Common myeloid progenitor, CD34-positive (primary cell): ENCODE measurements at regions of chr17 and their contacts with region 1.

Region 1: GRCh38 chr17:8057691-8058114 is 18.8 kb downstream of the ALOX15B start:
- DNase-seq: peak; percentile 81 to 91 (median 89)
- H3K4me3 ChIP-seq: peak overlapping the region in 1 of 7 experiments; percentile 14
- H3K27ac ChIP-seq: no peak overlapping the region
- H3K4me1 ChIP-seq: peaks cover 35 to 58% (median 53%) of the 10 kb centered on the region in 4 experiments
- H3K27me3 ChIP-seq: peaks cover 0 to 10% (median 4%) of the 10 kb centered on the region in 5 experiments

Region 2: DNA sequence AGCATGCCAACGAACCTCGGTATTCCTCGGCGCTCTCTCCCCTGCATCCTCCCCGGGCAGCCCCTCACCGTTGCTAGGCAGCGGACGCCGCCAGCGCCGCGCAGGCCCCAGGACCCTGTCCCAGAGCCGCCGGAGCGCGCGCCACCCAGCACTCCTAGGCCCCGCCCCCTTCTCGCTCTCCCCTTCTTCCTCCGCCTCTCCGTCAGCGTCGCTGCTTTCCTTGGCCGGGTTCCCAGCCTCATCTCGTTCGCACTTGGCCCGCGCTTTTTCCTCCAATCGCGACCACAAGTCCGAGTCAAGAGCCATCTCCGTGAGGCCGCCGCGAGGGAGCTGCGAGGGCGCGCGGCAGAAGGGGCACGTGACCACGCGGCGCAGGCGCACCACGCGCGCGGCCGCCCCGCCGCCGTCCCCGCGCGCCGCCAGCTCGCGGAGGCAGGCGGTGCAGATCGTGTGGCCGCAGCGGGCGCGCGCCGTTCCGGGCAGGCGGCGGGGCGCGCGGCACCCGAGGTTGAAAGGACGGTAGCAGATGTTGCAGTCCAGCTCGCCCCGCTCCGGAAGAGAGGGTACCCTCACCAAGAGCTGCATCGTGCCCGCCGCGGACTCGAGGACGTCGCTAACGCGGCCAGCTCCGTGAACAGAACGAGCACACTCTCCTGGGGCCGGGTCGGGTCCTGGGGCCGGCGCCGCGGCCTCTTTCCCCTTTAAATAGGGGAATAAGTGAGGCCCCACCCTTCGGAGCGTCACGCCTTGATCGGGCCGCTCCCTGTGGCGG is 141.9 kb before region 1 on chr17 and contains the start of gene RNF227:
- CTCF ChIA-PET with region 1: interaction called, 19 read pairs
- POLR2A ChIA-PET with region 1: interaction called, 4 read pairs
- DNase-seq: peak; percentile 93 to 96 (median 96)
- H3K4me3 ChIP-seq: peak within 1 kb of the TSS; percentile 11 to 80 (median 48)
- H3K27ac ChIP-seq: peak within 1 kb of the TSS in 1 of 2 experiments; percentile 36
- H3K4me1 ChIP-seq: peaks cover 0 to 27% (median 22%) of the 10 kb centered on the region in 4 experiments
- H3K27me3 ChIP-seq: peaks cover 0 to 3% (median 0%) of the 10 kb centered on the region in 5 experiments

Region 3: GRCh38 chr17:7989781-7990655 is 67.7 kb before region 1 on chr17:
- CTCF ChIA-PET with region 1: interaction called, 21 read pairs
- POLR2A ChIA-PET with region 1: no interaction called
- DNase-seq: peak; percentile 80 to 87 (median 86)
- H3K4me3 ChIP-seq: peak overlapping the region; percentile 35 to 78 (median 60)
- H3K27ac ChIP-seq: no peak overlapping the region
- H3K4me1 ChIP-seq: peaks cover 4 to 27% (median 16%) of the 10 kb centered on the region in 4 experiments
- H3K27me3 ChIP-seq: no peaks in the 10 kb centered on the region

Region 4: DNA sequence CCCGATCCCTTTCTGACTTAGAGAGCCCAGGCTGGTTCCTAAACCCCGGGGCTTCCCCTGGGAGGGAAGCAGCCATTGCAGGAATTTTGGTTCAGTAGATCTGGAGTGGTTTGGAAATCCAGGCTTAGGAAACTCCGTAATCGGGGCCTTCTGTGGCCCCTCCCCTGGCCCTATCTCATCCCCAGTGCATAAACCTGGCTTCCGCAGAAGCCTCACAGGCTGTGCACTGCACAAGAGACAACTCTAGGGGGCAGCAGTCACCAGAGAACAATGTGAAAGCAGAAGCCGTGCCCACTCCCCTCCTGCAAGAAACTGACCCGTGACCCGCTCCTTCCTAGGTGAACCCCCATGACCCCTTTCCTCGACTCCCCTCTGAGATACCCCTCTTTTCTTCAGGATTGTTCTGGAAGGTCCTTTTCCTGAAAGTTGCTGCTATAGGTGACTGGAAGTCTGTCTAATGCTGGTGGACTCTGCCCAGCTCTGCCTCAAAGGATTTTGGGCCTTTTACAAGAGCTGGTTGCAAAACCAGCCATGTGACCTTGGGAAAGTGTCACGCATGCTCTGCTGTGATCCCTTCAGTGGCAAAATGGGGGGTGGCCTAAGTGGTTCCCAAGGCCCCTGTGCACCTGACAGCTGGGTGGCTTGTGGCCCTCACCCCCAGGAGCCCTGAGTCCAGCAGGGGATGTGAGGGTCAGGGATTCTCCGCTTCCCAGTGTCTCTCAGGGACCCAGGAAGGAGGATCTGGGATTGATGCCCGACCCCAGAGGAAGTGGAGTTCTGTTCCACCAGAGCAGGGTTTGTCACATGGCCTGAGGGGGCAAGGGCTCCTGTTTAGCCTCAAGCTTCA is 40.8 kb before region 1 on chr17:
- CTCF ChIA-PET with region 1: interaction called, 35 read pairs
- POLR2A ChIA-PET with region 1: interaction called, 5 read pairs
- DNase-seq: peak in 2 of 3 donors; percentile 77 to 78
- H3K4me3 ChIP-seq: peak overlapping the region; percentile 11 to 77 (median 65)
- H3K27ac ChIP-seq: no peak overlapping the region
- H3K4me1 ChIP-seq: peaks cover 7 to 65% (median 61%) of the 10 kb centered on the region in 4 experiments
- H3K27me3 ChIP-seq: peaks cover 0 to 3% (median 0%) of the 10 kb centered on the region in 5 experiments

Region 5: DNA sequence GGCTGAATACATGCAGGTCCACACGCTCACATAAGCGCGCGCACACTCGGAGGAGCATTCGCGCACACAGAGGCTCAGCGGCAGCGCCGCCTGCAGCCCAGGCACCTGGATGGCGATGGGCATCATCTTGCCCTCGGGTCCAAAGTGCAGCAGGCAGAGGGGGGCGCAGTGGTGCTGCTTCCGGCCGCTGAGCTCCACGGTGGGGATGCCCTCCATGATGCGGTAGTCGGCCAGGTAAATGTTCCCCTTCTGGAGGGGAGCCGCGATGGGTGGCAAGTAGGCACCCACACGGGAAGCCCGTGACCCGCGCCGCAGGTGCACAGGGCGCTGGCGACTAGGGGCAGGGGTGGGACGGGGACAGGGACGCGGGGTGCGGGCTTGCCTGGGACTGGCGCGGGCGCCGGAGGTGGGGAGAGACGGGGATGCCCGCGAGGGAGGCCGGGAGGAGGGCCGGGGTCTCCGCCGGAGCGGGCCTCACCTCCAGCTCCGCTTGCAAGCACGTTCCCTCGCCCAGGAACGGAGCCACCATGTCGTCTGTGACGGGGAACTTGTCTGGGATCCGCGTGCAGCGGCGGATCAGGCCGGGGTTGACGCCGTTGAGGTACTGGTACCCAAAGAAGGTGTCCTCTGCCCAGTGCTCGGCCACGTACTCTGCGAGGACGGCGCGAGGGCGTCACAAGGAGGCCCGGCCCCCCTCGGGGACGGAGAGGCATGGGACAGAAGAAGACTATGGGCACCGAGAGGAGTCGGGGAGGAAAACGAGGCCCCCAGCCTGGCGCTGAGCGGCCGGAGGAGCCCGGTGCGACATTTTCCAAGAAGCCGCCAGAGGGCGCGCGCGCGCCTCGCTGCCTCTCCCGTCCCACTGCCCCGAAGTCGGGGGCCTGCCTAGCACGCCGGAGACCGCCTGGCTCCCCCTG is 21.8 kb after region 1 on chr17:
- CTCF ChIA-PET with region 1: interaction called, 216 read pairs
- POLR2A ChIA-PET with region 1: no interaction called
- DNase-seq: peak; percentile 78 to 90 (median 88)
- H3K4me3 ChIP-seq: peak overlapping the region; percentile 31 to 84 (median 55)
- H3K27ac ChIP-seq: no peak overlapping the region
- H3K4me1 ChIP-seq: peaks cover 0 to 14% (median 12%) of the 10 kb centered on the region in 4 experiments
- H3K27me3 ChIP-seq: peaks cover 0 to 12% (median 8%) of the 10 kb centered on the region in 5 experiments

Region 6: GRCh38 chr17:8103549-8103948 is 45.8 kb after region 1 on chr17:
- CTCF ChIA-PET with region 1: interaction called, 31 read pairs
- POLR2A ChIA-PET with region 1: no interaction called
- DNase-seq: no peak
- H3K4me3 ChIP-seq: no peak overlapping the region
- H3K27ac ChIP-seq: no peak overlapping the region
- H3K4me1 ChIP-seq: peaks cover 0 to 8% (median 5%) of the 10 kb centered on the region in 4 experiments
- H3K27me3 ChIP-seq: no peaks in the 10 kb centered on the region

Region 7: GRCh38 chr17:8118769-8119580 is 61.3 kb after region 1 on chr17:
- CTCF ChIA-PET with region 1: interaction called, 51 read pairs
- POLR2A ChIA-PET with region 1: no interaction called
- DNase-seq: peak; percentile 86 to 93 (median 90)
- H3K4me3 ChIP-seq: peak overlapping the region; percentile 44 to 94 (median 84)
- H3K27ac ChIP-seq: peak overlapping the region in 1 of 2 experiments; percentile 58
- H3K4me1 ChIP-seq: peaks cover 2 to 57% (median 53%) of the 10 kb centered on the region in 4 experiments
- H3K27me3 ChIP-seq: peaks cover 4 to 64% (median 32%) of the 10 kb centered on the region in 5 experiments

Region 8: GRCh38 chr17:8248751-8249607 is 191.3 kb after region 1 on chr17 and contains the start of gene PFAS:
- CTCF ChIA-PET with region 1: no interaction called
- POLR2A ChIA-PET with region 1: no interaction called
- DNase-seq: peak; percentile 95 to 97 (median 97)
- H3K4me3 ChIP-seq: peak within 1 kb of the TSS; percentile 91 to 99 (median 95)
- H3K27ac ChIP-seq: peak within 1 kb of the TSS; percentile 98
- H3K4me1 ChIP-seq: peaks cover 8 to 26% (median 22%) of the 10 kb centered on the region in 4 experiments
- H3K27me3 ChIP-seq: no peaks in the 10 kb centered on the region